ENCODE measurements at regions of chr20 and their contacts with region 1.

Region 1: DNA sequence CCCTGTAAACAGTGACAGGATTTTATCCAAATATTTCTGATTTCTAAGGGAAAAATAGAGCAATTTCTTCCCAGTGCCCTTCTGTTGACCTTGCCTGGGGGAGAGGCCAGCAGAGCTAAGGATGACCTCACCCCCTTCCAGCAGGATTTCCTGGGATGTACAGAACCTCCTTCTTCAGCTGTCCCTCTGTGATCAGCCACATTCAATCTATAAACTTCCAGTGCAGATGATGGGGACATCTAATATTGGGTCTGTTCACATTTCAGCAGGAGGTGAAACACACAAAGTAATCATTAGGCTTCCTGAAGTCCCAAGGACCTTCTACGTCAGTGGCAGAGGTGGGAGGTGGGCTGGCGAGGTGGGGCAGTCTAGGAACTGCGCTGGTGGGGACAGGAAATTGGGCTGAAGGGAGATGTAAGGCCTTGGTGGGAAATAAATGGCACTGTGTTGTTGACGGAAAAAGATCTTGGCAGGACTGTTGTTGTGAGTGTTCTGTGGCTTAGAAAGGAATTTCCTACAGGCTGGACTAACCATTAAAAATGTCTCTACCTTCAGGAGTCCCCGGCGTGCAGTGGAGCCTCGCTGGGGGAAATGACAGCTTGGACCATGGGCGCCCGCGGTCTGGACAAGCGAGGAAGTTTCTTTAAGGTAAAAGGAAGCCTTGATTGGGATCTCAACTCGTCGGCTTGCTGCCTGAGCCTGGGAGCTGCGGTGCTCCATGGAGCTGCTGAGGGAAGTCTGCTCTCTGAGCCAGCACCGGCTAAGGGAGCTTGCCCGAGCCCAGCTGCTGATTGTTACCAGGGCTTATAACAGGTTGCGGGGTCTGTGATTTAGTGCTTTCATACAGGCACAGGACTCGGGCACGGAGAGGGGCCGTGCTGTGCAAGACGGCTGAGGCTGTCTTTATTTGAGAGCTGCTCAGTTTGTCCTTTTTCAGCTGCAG is 127.9 kb upstream of the NAA20 start:
- DNase-seq: peak in 1 of 2 experiments; percentile 48
- ATAC-seq: 0 out of 6 replicates have a peak, but pooled peaks of 1 of the 2 experiments have one; percentile 9
- H3K4me3 ChIP-seq: peak overlapping the region; percentile 31; the same call in 2 of the 3 replicates
- H3K27ac ChIP-seq: peak overlapping the region; percentile 92 to 97
- H3K4me1 ChIP-seq: peaks cover 61% of the 10 kb centered on the region
- CTCF ChIP-seq: no peak
- EP300 ChIP-seq: no peak
- POLR2A ChIP-seq: no peak
- RAD21 ChIP-seq: no peak

Region 2: DNA sequence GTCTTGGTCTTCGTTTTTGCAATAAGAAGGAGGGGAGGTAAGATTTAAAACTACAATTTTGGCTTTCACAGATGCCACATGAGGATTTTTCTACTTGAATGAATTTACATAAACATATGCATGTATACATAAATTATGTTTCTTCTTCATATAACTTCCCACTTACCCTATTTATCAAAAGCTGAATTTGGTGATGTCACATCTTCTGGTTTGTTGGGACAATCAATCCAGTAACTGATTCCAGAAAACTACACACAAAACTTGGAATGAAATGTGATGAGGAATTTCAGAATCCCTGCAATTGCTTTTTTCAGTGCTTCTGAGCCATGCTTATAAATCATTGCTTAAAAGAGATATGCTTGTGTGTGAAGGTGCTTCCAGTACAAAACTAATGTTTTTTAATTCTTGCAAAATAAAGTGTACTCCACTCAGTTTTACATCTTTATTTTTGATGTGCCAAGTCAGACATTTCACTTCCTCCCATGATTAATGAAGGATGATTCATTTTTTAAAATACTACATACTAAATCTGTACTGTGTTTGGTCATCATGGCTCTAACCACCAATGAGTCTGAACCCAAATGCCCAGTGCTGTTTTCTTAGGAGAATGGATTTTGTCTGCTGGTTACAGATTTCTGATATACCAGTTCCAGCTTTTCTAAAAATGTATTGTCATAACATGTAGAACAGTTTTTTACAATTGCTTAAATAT is 163.3 kb before region 1 on chr20:
- CTCF ChIA-PET with region 1: no interaction called
- POLR2A ChIA-PET with region 1: no interaction called
- DNase-seq: no peak
- ATAC-seq: no peak
- H3K4me3 ChIP-seq: no peak overlapping the region
- H3K27ac ChIP-seq: no peak overlapping the region
- H3K4me1 ChIP-seq: 0 out of 3 replicates have a peak, but pooled peaks cover 6% of the 10 kb centered on the region
- CTCF ChIP-seq: no peak
- EP300 ChIP-seq: no peak
- POLR2A ChIP-seq: no peak
- RAD21 ChIP-seq: no peak

Region 3: GRCh38 chr20:19757487-19758132 is 131.7 kb before region 1 on chr20:
- CTCF ChIA-PET with region 1: interaction called, 4 read pairs
- POLR2A ChIA-PET with region 1: interaction called, 12 read pairs
- DNase-seq: peak; percentile 96 to 98
- ATAC-seq: peak; percentile 85 to 93
- H3K4me3 ChIP-seq: peak overlapping the region; percentile 72
- H3K27ac ChIP-seq: peak overlapping the region; percentile 85 to 89
- H3K4me1 ChIP-seq: peaks cover 28% of the 10 kb centered on the region
- CTCF ChIP-seq: no peak
- EP300 ChIP-seq: no peak
- POLR2A ChIP-seq: peak; percentile 47
- RAD21 ChIP-seq: peak in 1 of 2 experiments; percentile 11; a peak in 1 of 5 replicates

Region 4: DNA sequence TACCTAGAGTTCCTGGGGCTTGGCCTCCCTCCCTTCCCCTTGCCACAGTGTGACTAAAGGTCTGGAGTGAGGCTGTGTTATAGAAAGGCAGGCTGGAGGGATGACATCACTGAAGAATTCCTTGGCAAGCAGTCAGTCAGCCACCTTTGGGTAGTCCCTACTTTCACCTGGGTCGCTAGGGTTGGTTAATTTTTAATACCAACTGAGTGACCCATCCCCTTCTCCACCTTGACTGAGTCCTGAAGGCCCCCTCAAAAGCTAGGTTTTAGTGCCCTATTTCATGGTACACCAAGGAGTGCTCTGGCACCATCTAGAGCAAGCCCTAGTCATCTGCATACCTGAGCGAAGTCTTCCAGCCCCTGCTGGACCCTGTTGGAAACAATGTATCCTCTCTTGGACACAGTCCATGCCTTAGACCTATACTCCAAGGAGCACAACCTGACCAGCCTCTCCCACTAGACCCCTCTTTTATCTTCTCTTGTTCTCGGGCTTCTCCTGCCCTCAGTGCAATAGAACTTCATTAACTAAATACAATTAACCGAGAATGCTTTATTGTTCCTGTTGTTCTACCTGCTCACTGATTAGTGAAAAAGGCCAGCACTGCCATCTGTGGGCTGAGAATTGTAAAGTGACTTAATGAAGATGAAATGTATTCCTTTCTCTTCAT is 86.7 kb before region 1 on chr20:
- CTCF ChIA-PET with region 1: interaction called, 10 read pairs
- POLR2A ChIA-PET with region 1: interaction called, 4 read pairs
- DNase-seq: peak; percentile 47 to 76
- ATAC-seq: peak; percentile 96 to 98
- H3K4me3 ChIP-seq: no peak overlapping the region
- H3K27ac ChIP-seq: peak overlapping the region; percentile 2 to 67; a peak in 5 of 6 replicates
- H3K4me1 ChIP-seq: peaks cover 28% of the 10 kb centered on the region
- CTCF ChIP-seq: peak; percentile 44
- EP300 ChIP-seq: no peak
- POLR2A ChIP-seq: no peak
- RAD21 ChIP-seq: peak; percentile 45 to 52

Region 5: DNA sequence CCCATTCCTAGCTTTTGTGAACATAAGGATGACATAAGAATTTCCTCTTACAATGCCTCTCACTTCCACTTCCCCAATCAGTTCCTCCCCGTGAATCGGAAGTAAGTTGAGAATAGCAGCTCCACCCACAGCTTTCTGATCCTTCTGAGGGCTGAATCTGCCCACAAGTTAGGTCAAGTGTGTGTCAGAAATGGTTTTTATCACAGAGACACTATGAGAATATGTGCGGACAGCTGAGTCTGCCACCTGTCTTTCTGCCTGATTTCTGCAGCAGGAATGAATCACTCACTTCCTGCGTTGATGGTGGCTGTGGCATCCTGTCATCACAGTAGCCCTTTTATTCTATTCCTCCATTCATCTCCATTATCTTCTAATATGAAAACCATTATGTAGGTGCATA is 61.0 kb before region 1 on chr20:
- CTCF ChIA-PET with region 1: interaction called, 41 read pairs
- POLR2A ChIA-PET with region 1: interaction called, 7 read pairs
- DNase-seq: peak; percentile 64 to 71
- ATAC-seq: peak; percentile 80 to 88
- H3K4me3 ChIP-seq: no peak overlapping the region
- H3K27ac ChIP-seq: peak overlapping the region; percentile 31 to 75; a peak in 4 of 6 replicates
- H3K4me1 ChIP-seq: peaks cover 21% of the 10 kb centered on the region
- CTCF ChIP-seq: peak; percentile 56
- EP300 ChIP-seq: no peak
- POLR2A ChIP-seq: no peak
- RAD21 ChIP-seq: peak; percentile 45 to 53; a peak in 2 of 5 replicates

Region 6: GRCh38 chr20:19974626-19975435 is 85.5 kb after region 1 on chr20:
- CTCF ChIA-PET with region 1: interaction called, 32 read pairs
- POLR2A ChIA-PET with region 1: interaction called, 92 read pairs
- DNase-seq: peak; percentile 77 to 89
- ATAC-seq: peak; percentile 83 to 87
- H3K4me3 ChIP-seq: peak overlapping the region; percentile 65
- H3K27ac ChIP-seq: peak overlapping the region; percentile 94 to 95
- H3K4me1 ChIP-seq: peaks cover 40% of the 10 kb centered on the region
- CTCF ChIP-seq: no peak
- EP300 ChIP-seq: no peak
- POLR2A ChIP-seq: peak; percentile 72
- RAD21 ChIP-seq: peak in 1 of 2 experiments; percentile 31; a peak in 3 of 5 replicates

Region 7: GRCh38 chr20:20393207-20394120 is 504.2 kb after region 1 on chr20:
- CTCF ChIA-PET with region 1: no interaction called
- POLR2A ChIA-PET with region 1: no interaction called
- DNase-seq: no peak
- ATAC-seq: no peak
- H3K4me3 ChIP-seq: no peak overlapping the region
- H3K27ac ChIP-seq: no peak overlapping the region
- H3K4me1 ChIP-seq: no peaks in the 10 kb centered on the region
- CTCF ChIP-seq: no peak
- EP300 ChIP-seq: no peak
- POLR2A ChIP-seq: no peak
- RAD21 ChIP-seq: no peak

Measured in A549 (cell line).